SK-N-SH (cell line): ENCODE measurements at regions of chr17 and their contacts with region 1.

Region 1: DNA sequence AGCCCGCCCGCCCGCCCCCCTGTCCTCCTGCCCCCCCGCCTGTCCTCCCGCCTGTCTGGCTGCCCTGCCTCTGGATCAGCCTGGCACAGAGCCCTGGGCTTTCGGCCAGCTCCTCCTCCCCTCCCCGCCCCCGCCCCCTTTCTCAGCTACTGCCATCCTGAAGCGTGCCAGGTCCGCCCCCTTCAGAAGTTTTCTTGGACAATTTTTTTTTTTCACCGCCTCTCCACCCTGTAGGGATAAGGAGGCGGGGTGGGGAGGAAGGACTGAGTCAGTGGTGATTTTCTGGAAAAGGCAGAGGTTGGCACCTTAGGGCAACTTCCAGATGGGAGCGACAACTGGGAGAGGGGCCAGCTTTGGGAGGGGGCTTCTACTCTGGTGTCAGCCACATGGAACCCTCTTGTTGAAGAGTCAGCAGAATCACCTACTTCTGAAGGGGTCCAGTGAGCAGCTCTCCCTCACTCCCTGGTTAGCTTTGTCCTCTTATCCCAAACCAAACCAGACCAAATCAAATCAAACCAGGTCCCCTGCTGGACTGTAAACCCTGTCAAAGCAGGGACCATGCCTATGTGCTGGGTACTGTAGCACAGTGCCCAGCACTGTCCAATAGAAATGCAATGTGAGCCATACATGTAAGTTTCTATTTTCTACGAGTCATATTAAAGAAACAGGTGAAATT is 19.7 kb downstream of the IGF2BP1 start:
- DNase-seq: peak; percentile 73
- H3K4me3 ChIP-seq: no peak overlapping the region
- H3K27ac ChIP-seq: no peak overlapping the region
- H3K4me1 ChIP-seq: peaks cover 0 to 10% of the 10 kb centered on the region in 2 experiments; a peak in 2 of 4 replicates
- H3K27me3 ChIP-seq: peaks cover 89% of the 10 kb centered on the region
- CTCF ChIP-seq: no peak
- EP300 ChIP-seq: no peak
- RAD21 ChIP-seq: no peak

Region 2: GRCh38 chr17:48890086-48890485 is 126.8 kb before region 1 on chr17:
- CTCF ChIA-PET with region 1: no interaction called
- POLR2A ChIA-PET with region 1: no interaction called
- DNase-seq: no peak
- H3K4me3 ChIP-seq: no peak overlapping the region
- H3K27ac ChIP-seq: no peak overlapping the region
- H3K4me1 ChIP-seq: peaks cover 10 to 11% of the 10 kb centered on the region in 2 experiments; a peak in 3 of 4 replicates
- H3K27me3 ChIP-seq: no peaks in the 10 kb centered on the region
- CTCF ChIP-seq: no peak
- EP300 ChIP-seq: no peak
- RAD21 ChIP-seq: no peak

Region 3: GRCh38 chr17:49003623-49004511 is 13.1 kb before region 1 on chr17:
- CTCF ChIA-PET with region 1: interaction called, 13 read pairs
- POLR2A ChIA-PET with region 1: no interaction called
- DNase-seq: no peak
- H3K4me3 ChIP-seq: no peak overlapping the region
- H3K27ac ChIP-seq: no peak overlapping the region
- H3K4me1 ChIP-seq: no peaks in the 10 kb centered on the region
- H3K27me3 ChIP-seq: peaks cover 99% of the 10 kb centered on the region
- CTCF ChIP-seq: no peak
- EP300 ChIP-seq: no peak
- RAD21 ChIP-seq: no peak